Naive thymus-derived CD4-positive, alpha-beta T cell (primary cell): ENCODE measurements at regions of chr14 and their contacts with region 1.

Region 1: GRCh38 chr14:88562831-88563686 is at the start of gene ZC3H14:
- DNase-seq: peak; percentile 80 to 91 (median 88)
- ATAC-seq: peak; percentile 98
- H3K4me3 ChIP-seq: peak within 1 kb of the TSS; percentile 84
- H3K4me3 Mint-ChIP-seq: peak within 1 kb of the TSS; percentile 89 to 96 (median 92)
- H3K27ac ChIP-seq: peak within 1 kb of the TSS; percentile 72
- H3K27ac Mint-ChIP-seq: peak within 1 kb of the TSS; percentile 49 to 94 (median 84)
- H3K4me1 ChIP-seq: peaks cover 12 to 13% of the 10 kb centered on the region in 2 donors
- H3K4me1 Mint-ChIP-seq: peaks cover 19 to 44% (median 38%) of the 10 kb centered on the region in 7 donors
- H3K27me3 ChIP-seq: no peaks in the 10 kb centered on the region
- H3K27me3 Mint-ChIP-seq: peaks cover 0 to 27% (median 0%) of the 10 kb centered on the region in 5 donors
- total RNA-seq, gene ZC3H14: 40.1 to 66.2 (median 45.6) TPM

Region 2: DNA sequence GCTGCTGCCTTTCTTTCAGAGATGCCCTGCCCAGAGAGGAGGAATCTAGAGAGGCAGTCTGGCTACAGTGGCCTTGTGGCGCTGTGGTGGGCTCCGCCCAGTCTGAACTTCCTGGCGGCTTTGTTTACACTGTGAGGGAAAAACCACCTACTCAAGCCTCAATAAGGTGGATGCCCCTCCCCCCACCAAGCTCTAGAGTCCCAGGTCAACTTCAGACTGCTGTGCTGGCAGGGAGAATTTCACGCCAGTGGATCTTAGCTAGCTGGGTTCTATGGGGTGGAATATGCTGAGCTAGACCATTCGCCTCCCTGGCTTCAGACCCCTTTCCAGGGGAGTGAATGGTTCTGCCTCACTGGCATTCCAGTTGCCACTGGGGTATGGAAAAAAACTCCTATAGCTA is 152.0 kb before region 1 on chr14:
- CTCF ChIA-PET with region 1: no interaction called
- POLR2A ChIA-PET with region 1: no interaction called
- intact Hi-C with region 1: no loop called
- DNase-seq: no peak
- ATAC-seq: no peak
- H3K4me3 ChIP-seq: no peak overlapping the region
- H3K4me3 Mint-ChIP-seq: no peak overlapping the region
- H3K27ac ChIP-seq: no peak overlapping the region
- H3K27ac Mint-ChIP-seq: no peak overlapping the region
- H3K4me1 ChIP-seq: no peaks in the 10 kb centered on the region
- H3K4me1 Mint-ChIP-seq: peaks cover 0 to 6% (median 0%) of the 10 kb centered on the region in 7 donors
- H3K27me3 ChIP-seq: no peaks in the 10 kb centered on the region
- H3K27me3 Mint-ChIP-seq: no peaks in the 10 kb centered on the region

Region 3: DNA sequence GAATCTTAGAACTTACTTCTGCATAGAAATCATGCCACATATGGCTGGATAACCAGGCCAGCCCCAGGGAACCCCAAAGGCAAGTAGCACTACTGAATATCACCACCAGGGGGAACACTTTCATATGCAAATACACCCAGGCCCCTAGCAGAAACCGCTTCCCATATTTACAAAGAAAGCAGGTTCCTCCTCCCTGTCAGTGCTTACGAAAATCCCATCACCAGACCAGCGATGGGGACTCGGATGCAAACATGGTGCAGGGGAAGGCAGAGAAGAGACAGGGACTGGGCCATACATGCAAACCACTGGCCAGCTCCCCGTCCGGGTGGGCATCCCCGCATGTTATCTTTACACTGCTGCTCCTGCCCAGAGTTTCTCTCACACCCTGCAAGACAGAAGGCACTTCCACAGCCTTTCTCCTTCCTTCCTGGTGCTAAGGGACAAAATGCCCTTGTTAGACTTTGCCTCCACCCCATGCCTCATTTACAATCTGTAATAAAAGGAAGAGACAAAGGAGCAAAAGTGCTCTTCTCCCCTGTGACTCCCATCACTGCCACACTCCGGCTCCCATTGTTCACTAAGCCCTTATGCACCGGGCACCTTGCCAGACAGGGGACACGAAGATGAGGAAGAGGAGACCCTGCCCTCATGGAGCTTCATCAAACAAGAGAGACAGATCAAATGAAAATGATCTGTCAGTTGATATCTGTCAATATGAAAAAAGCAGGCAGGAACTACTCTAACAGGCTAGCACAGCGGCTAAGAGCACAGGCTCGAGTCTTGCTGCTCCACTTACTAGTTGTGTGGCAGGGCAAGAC is 70.6 kb before region 1 on chr14:
- CTCF ChIA-PET with region 1: interaction called, 4 read pairs
- POLR2A ChIA-PET with region 1: no interaction called
- intact Hi-C with region 1: loop called (anchors 1 kb)
- DNase-seq: peak in 8 of 9 donors; percentile 36 to 73 (median 58)
- ATAC-seq: peak; percentile 90
- H3K4me3 ChIP-seq: no peak overlapping the region
- H3K4me3 Mint-ChIP-seq: no peak overlapping the region
- H3K27ac ChIP-seq: no peak overlapping the region
- H3K27ac Mint-ChIP-seq: no peak overlapping the region
- H3K4me1 ChIP-seq: no peaks in the 10 kb centered on the region
- H3K4me1 Mint-ChIP-seq: peaks cover 0 to 7% (median 0%) of the 10 kb centered on the region in 7 donors
- H3K27me3 ChIP-seq: no peaks in the 10 kb centered on the region
- H3K27me3 Mint-ChIP-seq: peaks cover 0 to 6% (median 4%) of the 10 kb centered on the region in 5 donors

Region 4: DNA sequence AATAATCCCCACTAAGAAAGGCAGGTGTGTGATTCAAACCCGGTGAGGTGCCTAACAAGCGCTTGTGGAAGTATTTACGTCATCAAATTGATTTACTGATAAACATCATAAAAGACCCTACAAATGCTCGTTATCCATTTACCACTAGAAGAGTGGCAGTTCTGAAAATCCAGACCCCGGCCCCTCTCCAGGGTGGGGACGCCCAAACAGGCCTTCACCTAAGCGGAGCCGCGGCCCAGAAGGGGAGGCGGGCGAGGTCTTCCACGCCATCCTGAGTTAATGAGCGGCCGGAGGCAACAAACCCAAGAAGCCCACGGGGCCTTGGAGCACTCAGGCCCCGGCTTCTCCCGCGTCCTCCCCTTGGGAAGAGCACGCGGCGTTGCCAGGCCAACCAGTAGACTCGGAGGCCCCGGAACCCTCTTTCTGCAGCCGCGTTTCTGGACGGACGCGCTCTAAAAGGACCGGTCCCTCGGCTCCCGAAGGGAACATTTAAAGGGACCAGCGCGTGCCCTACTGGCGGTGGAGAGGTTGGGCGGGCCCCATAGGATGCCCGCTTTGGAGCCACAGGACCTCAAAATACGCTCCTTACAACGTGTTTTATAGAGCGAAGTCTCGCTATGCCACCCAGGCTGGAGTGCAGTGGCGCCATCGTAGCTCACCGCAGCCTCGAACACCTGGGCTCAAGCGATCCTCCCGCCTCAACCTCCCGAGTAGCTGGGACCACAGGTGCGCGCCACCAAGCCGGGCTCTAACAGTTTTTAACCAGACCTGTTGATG is 11.8 kb before region 1 on chr14:
- CTCF ChIA-PET with region 1: no interaction called
- POLR2A ChIA-PET with region 1: interaction called, 4 read pairs
- intact Hi-C with region 1: loop called in 1 of 2 experiments (anchors 1 kb)
- DNase-seq: peak in 3 of 9 donors; percentile 31 to 59 (median 33)
- ATAC-seq: peak; percentile 43
- H3K4me3 ChIP-seq: peak overlapping the region; percentile 49
- H3K4me3 Mint-ChIP-seq: peak overlapping the region; percentile 41 to 80 (median 71)
- H3K27ac ChIP-seq: no peak overlapping the region
- H3K27ac Mint-ChIP-seq: no peak overlapping the region
- H3K4me1 ChIP-seq: peaks cover 6 to 7% of the 10 kb centered on the region in 2 donors
- H3K4me1 Mint-ChIP-seq: peaks cover 6 to 29% (median 18%) of the 10 kb centered on the region in 7 donors
- H3K27me3 ChIP-seq: peaks cover 31 to 36% of the 10 kb centered on the region in 2 donors
- H3K27me3 Mint-ChIP-seq: peaks cover 40 to 46% (median 45%) of the 10 kb centered on the region in 5 donors

Region 5: GRCh38 chr14:88824314-88825077 is 261.4 kb after region 1 on chr14 and contains the start of gene TTC8:
- CTCF ChIA-PET with region 1: no interaction called
- POLR2A ChIA-PET with region 1: no interaction called
- intact Hi-C with region 1: loop called (anchors 1 to 2 kb)
- DNase-seq: peak; percentile 75 to 92 (median 88)
- ATAC-seq: peak; percentile 98
- H3K4me3 ChIP-seq: peak within 1 kb of the TSS; percentile 74
- H3K4me3 Mint-ChIP-seq: peak within 1 kb of the TSS; percentile 72 to 98 (median 90)
- H3K27ac ChIP-seq: peak within 1 kb of the TSS; percentile 85
- H3K27ac Mint-ChIP-seq: peak within 1 kb of the TSS; percentile 97 to 99 (median 99)
- H3K4me1 ChIP-seq: peaks cover 5 to 6% of the 10 kb centered on the region in 2 donors
- H3K4me1 Mint-ChIP-seq: peaks cover 0 to 13% (median 11%) of the 10 kb centered on the region in 7 donors
- H3K27me3 ChIP-seq: no peaks in the 10 kb centered on the region
- H3K27me3 Mint-ChIP-seq: peaks cover 0 to 30% (median 8%) of the 10 kb centered on the region in 5 donors
- total RNA-seq, gene TTC8: 1.8 to 3.4 (median 2.1) TPM

Region 6: DNA sequence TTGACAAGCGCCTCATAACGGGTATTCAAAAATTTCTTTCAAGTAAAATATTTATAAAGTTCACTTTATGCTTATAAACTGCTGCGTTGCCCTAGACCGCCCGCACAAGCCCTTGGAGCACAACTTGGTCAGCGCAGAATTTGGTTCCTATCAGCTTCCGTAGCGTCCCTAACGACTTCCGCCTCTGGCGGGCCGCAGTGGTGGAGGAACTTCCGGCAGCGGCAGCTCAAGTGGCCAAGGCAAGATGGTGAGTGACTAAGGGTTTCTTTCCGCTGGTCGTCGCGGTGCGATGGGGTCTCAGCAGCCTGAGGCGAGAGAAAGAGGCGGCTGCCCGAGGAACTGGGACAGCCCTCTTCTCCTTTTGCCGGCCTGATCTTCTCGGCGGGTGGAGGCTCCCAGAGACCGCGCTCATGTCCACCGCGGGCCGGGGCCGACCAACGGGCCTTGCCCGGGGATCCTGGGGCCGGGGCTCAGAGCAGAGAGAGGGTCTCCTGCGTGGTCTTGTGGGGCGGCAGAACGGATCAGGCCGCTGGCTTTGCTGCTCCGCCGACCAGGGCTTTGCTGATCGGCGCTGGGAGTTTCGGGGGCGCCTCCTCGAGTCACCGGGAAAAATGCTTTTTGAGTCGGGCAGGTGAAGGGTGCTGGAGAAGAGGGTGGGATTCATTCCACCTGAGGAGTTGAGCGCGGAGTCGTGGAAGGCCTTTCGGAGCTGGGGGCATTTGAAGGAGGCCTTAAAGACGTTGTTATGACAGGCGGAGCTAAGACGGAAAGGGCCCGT is 1693.5 kb after region 1 on chr14 and contains the start of gene PSMC1:
- CTCF ChIA-PET with region 1: no interaction called
- POLR2A ChIA-PET with region 1: no interaction called
- intact Hi-C with region 1: loop called in 1 of 2 experiments (anchors 2 kb)
- DNase-seq: peak; percentile 51 to 89 (median 85)
- ATAC-seq: peak; percentile 97
- H3K4me3 ChIP-seq: peak within 1 kb of the TSS; percentile 87
- H3K4me3 Mint-ChIP-seq: peak within 1 kb of the TSS; percentile 86 to 99 (median 96)
- H3K27ac ChIP-seq: peak within 1 kb of the TSS; percentile 86
- H3K27ac Mint-ChIP-seq: peak within 1 kb of the TSS; percentile 90 to 98 (median 96)
- H3K4me1 ChIP-seq: peaks cover 13 to 17% of the 10 kb centered on the region in 2 donors
- H3K4me1 Mint-ChIP-seq: peaks cover 12 to 39% (median 34%) of the 10 kb centered on the region in 7 donors
- H3K27me3 ChIP-seq: no peaks in the 10 kb centered on the region
- H3K27me3 Mint-ChIP-seq: peaks cover 0 to 10% (median 7%) of the 10 kb centered on the region in 5 donors
- total RNA-seq, gene PSMC1: 47.9 to 101 (median 58.2) TPM